Endothelial cell of umbilical vein (primary cell): ENCODE measurements at regions of chr15 and their contacts with region 1.

Region 1: GRCh38 chr15:44286814-44287452 is 1.6 kb upstream of the GOLM2 start:
- DNase-seq: peak; percentile 24
- H3K4me3 ChIP-seq: peak overlapping the region; percentile 81 to 97 (median 82)
- H3K27ac ChIP-seq: no peak overlapping the region
- H3K4me1 ChIP-seq: peaks cover 19% of the 10 kb centered on the region
- H3K27me3 ChIP-seq: no peaks in the 10 kb centered on the region
- CTCF ChIP-seq: no peak
- POLR2A ChIP-seq: no peak

Region 2: DNA sequence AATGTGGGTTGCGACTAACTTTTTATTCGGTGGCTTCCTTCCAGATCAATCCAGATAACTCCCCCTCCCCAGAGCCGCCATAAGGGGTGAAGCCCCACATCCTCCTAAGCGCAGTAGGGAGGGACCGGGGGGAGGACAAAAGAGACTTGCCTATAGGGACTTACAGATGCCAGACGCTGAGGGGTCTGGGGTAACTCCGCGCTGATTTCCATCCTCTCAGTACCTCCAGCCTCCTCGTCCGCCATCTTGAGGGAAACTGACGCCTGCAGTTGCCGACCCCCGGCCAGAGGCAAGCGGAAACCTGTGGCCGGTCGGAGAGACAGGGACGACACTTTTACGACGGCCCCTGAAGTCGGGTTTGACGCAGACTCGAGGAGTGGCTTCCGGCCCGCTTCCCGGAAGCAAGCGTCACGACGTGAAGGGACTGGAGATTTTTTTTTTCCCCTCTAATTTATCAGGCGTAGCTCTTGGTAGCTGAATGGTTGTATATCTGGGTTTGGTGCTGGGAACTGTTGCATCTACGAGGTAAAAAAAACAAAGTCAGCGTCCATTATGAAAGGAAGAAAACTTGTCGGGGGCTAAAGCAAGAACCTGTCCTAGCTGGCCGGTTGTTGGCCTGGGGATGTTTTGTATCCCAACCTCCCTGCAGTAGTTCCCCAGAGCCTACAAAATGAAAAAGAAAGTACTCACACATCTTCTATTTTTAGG is 1181.0 kb before region 1 on chr15 and contains the start of gene UBR1:
- CTCF ChIA-PET with region 1: no interaction called
- POLR2A ChIA-PET with region 1: no interaction called
- dilution Hi-C with region 1: no loop called
- intact Hi-C with region 1: loop called (anchors 10 kb)
- DNase-seq: peak; percentile 89
- H3K4me3 ChIP-seq: peak within 1 kb of the TSS; percentile 65 to 96 (median 91)
- H3K27ac ChIP-seq: peak within 1 kb of the TSS; percentile 84
- H3K4me1 ChIP-seq: peaks cover 21% of the 10 kb centered on the region
- H3K27me3 ChIP-seq: no peaks in the 10 kb centered on the region
- CTCF ChIP-seq: no peak
- POLR2A ChIP-seq: peak; percentile 67
- total RNA-seq, gene UBR1: 26.9 and 28.8 TPM in 2 replicates

Region 3: DNA sequence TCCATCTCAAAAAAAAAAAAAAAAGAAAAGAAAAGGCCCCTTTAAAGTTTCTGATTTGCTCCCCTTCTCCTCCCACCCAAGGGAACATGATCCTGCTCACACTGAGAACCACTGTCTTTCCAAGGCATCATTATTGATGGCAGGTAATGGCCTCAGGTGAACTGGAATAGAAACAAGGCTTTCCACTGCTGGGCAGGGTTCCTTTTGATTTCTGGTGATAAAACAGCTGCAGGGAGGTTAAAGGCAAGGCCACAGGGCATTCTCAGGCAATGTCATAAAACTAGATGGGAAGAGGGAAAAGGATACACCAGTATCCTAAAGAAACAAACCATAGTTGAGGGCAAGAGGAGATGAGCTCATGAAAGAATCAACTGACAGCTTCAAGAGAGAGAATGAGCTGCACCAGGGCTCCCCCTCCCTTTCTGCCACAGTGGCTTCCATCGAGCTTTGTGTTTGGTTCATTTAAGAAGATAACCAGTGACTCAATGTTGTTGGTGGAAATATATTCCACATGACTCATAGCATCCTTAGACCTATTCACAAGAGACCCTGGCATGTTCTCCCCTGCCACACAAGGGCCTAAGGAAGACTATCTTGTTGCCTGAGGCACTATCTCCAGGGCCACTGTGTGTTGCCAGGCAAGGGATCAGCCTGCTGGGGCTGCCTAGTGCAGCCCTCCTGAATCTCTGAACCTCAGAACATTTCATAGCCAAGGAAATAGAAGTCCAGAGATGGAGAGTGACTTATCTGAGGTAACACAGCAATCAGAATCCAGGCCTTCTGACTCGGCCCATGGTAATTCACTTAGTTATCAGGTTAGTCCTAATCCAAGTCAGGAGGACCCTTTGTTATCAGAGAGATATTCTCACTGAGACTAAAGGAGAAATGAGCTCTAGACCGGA is 373.7 kb before region 1 on chr15:
- CTCF ChIA-PET with region 1: no interaction called
- POLR2A ChIA-PET with region 1: no interaction called
- dilution Hi-C with region 1: no loop called
- intact Hi-C with region 1: loop called (anchors 5 kb)
- DNase-seq: peak; percentile 98
- H3K4me3 ChIP-seq: no peak overlapping the region
- H3K27ac ChIP-seq: peak overlapping the region; percentile 89
- H3K4me1 ChIP-seq: peaks cover 38% of the 10 kb centered on the region
- H3K27me3 ChIP-seq: no peaks in the 10 kb centered on the region
- CTCF ChIP-seq: no peak
- POLR2A ChIP-seq: peak; percentile 46

Region 4: GRCh38 chr15:44157685-44158099 is 129.2 kb before region 1 on chr15:
- CTCF ChIA-PET with region 1: no interaction called
- POLR2A ChIA-PET with region 1: no interaction called
- dilution Hi-C with region 1: no loop called
- intact Hi-C with region 1: loop called (anchors 10 kb)
- DNase-seq: peak; percentile 94
- H3K4me3 ChIP-seq: peak overlapping the region in 1 of 3 experiments; percentile 29
- H3K27ac ChIP-seq: peak overlapping the region; percentile 79
- H3K4me1 ChIP-seq: peaks cover 28% of the 10 kb centered on the region
- H3K27me3 ChIP-seq: no peaks in the 10 kb centered on the region
- CTCF ChIP-seq: no peak
- POLR2A ChIP-seq: peak; percentile 42

Region 5: DNA sequence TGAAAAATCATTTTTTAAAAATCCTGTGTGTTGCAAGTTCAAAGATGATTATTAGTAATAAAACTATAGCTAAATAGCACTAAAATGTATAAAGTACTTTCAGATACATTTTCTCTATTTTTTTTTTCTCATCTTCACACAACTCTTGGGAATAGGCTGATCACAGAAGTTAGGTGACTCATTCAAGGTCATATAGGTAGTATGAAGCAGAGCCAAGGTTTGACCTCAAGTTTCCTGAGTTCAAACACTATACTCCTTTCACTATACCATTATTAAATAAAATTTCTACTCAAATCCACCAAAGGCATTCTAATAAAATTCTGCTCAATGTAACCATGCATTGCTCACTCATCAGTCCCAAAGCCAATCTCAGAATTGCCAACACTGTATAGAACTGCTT is 113.1 kb before region 1 on chr15:
- CTCF ChIA-PET with region 1: no interaction called
- POLR2A ChIA-PET with region 1: no interaction called
- dilution Hi-C with region 1: no loop called
- intact Hi-C with region 1: no loop called
- DNase-seq: no peak
- H3K4me3 ChIP-seq: no peak overlapping the region
- H3K27ac ChIP-seq: no peak overlapping the region
- H3K4me1 ChIP-seq: peaks cover 5% of the 10 kb centered on the region
- H3K27me3 ChIP-seq: no peaks in the 10 kb centered on the region
- CTCF ChIP-seq: no peak
- POLR2A ChIP-seq: no peak

Region 6: DNA sequence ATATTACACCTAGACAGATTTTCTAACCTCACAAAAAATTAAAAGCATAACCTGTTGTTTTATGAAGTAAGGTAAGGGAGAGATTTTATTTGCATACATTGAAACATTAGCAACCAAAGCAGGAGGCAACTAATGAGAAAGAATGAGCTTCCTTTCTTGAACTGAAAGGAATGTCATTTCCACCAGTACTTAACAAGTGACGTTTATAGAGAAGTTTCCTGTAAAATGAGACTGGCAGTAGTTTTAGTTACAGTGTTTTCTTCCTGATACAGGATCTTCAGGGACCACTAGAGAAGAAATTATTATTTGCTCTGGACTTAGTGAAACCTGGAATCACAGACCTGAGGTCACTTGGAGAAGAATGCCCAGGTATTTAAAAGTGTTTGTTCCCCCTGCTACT is 64.5 kb before region 1 on chr15:
- CTCF ChIA-PET with region 1: interaction called, 5 read pairs
- POLR2A ChIA-PET with region 1: no interaction called
- dilution Hi-C with region 1: no loop called
- intact Hi-C with region 1: loop called (anchors 5 kb)
- DNase-seq: peak; percentile 59
- H3K4me3 ChIP-seq: no peak overlapping the region
- H3K27ac ChIP-seq: no peak overlapping the region
- H3K4me1 ChIP-seq: peaks cover 14% of the 10 kb centered on the region
- H3K27me3 ChIP-seq: peaks cover 9 to 12% of the 10 kb centered on the region in 2 experiments
- CTCF ChIP-seq: no peak
- POLR2A ChIP-seq: no peak

Region 7: DNA sequence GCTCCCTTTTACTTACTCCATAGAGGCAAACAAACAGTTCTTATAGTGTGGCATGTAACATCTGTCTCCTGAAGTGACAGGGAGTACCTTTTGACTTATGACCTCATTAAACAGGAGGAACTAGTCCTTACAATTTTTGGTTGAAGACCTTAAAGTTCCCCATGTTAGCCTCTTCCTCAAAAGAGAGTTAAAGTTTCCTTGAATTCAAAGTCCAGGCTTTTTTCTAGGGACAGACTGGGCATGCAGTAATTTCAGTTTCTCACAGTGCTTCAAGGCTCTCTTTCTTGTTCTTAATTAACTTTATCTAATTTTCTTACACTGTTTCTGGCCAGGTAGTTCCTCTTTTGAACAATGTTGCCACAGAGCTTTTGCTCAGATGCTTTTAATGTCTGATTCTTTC is 13.6 kb after region 1 on chr15:
- CTCF ChIA-PET with region 1: interaction called, 10 read pairs
- POLR2A ChIA-PET with region 1: interaction called, 3 read pairs
- dilution Hi-C with region 1: no loop called
- intact Hi-C with region 1: no loop called
- DNase-seq: no peak
- H3K4me3 ChIP-seq: no peak overlapping the region
- H3K27ac ChIP-seq: no peak overlapping the region
- H3K4me1 ChIP-seq: peaks cover 5% of the 10 kb centered on the region
- H3K27me3 ChIP-seq: no peaks in the 10 kb centered on the region
- CTCF ChIP-seq: no peak
- POLR2A ChIP-seq: no peak

Region 8: DNA sequence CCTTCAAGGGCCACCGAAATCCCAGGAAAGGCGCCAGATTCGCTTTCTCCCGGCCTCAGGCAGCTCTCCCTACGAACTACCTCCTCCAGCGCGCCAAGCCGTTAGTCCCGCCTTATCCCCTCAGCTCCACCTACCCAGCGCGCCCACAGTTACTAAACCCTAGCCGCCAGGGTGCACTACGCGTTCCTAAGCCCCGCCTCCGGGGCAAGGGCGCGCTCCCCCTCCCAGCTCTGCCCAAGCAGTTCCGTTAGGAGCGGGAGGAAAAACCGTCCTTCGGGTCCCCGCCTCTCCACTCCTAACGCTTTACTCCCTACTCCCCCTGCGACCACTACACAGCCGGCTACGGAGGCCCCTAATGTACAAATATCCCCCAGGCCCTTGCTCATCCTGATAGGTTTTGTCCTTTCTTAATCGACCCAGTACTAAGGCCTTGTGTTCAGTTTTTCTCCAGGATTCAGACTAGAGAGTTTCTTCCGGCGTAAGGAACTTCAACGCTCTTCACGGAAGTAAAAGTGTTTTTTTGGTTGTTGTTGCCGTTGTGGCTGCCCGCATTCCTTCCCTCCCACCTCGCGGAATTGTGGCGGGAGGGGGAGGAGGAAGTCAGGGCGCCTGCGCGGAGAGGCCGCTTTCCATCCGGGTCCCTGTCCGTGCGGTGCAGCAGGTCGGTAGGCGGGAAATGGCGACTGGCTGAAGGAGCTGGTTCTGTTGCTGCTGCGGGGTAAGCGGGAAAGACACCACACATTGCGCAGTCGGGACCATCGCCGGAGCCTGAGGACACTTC is 140.2 kb after region 1 on chr15 and contains the start of gene CTDSPL2:
- CTCF ChIA-PET with region 1: interaction called, 6 read pairs
- POLR2A ChIA-PET with region 1: interaction called, 4 read pairs
- dilution Hi-C with region 1: no loop called
- intact Hi-C with region 1: loop called (anchors 1 kb)
- DNase-seq: peak; percentile 100
- H3K4me3 ChIP-seq: peak within 1 kb of the TSS; percentile 62 to 96 (median 68)
- H3K27ac ChIP-seq: peak within 1 kb of the TSS; percentile 96
- H3K4me1 ChIP-seq: peaks cover 18% of the 10 kb centered on the region
- H3K27me3 ChIP-seq: no peaks in the 10 kb centered on the region
- CTCF ChIP-seq: peak; percentile 17 to 46
- POLR2A ChIP-seq: peak; percentile 73
- total RNA-seq, gene CTDSPL2: 46.0 and 55.1 TPM in 2 replicates

Region 9: DNA sequence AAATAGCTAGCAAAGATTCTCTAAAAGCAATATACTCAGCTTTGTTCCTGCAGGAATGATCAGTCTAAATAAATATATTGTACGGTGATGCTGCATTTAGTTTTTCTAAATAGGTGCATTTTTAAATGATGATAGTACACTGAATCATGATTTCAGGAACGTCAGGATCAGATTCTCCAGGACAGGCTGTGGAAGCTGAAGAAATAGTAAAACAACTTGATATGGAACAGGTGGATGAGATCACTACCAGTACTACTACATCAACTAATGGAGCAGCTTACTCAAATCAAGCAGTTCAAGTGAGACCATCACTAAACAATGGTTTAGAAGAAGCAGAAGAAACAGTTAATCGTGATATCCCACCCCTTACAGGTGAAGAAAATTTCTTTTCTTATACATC is 203.7 kb after region 1 on chr15:
- CTCF ChIA-PET with region 1: no interaction called
- POLR2A ChIA-PET with region 1: no interaction called
- dilution Hi-C with region 1: no loop called
- intact Hi-C with region 1: no loop called
- DNase-seq: no peak
- H3K4me3 ChIP-seq: no peak overlapping the region
- H3K27ac ChIP-seq: no peak overlapping the region
- H3K4me1 ChIP-seq: peaks cover 12% of the 10 kb centered on the region
- H3K27me3 ChIP-seq: no peaks in the 10 kb centered on the region
- CTCF ChIP-seq: no peak
- POLR2A ChIP-seq: no peak